Dorsolateral prefrontal cortex (tissue), 120 donors: ENCODE measurements at regions of chr7 and their contacts with region 1.

Region 1: GRCh38 chr7:98569691-98570337 is 47.3 kb upstream of the NPTX2 start:
- DNase-seq: peak; percentile 32 to 93 (median 82)
- H3K4me3 ChIP-seq: peak overlapping the region in 35 of 59 donors; percentile 9 to 55 (median 29)
- H3K27ac ChIP-seq: peak overlapping the region in 57 of 59 donors; percentile 26 to 96 (median 85)
- H3K27me3 ChIP-seq: peaks cover 0 to 5% (median 0%) of the 10 kb centered on the region in 45 donors
- CTCF ChIP-seq: no peak

Region 2: GRCh38 chr7:98434095-98434494 is 135.7 kb before region 1 on chr7:
- intact Hi-C with region 1: loop called in 1 of 2 experiments (anchors 5 kb)
- DNase-seq: no peak
- H3K4me3 ChIP-seq: no peak overlapping the region
- H3K27ac ChIP-seq: no peak overlapping the region
- H3K27me3 ChIP-seq: peaks cover 0 to 3% (median 0%) of the 10 kb centered on the region in 45 donors
- CTCF ChIP-seq: no peak

Region 3: GRCh38 chr7:98826387-98827231 is 256.8 kb after region 1 on chr7:
- intact Hi-C with region 1: loop called in 1 of 2 experiments (anchors 10 kb)
- DNase-seq: peak; percentile 49 to 97 (median 78)
- H3K4me3 ChIP-seq: peak overlapping the region in 3 of 59 donors; percentile 9 to 23 (median 12)
- H3K27ac ChIP-seq: peak overlapping the region in 2 of 59 donors; percentile 21 to 46
- H3K27me3 ChIP-seq: no peaks in the 10 kb centered on the region
- CTCF ChIP-seq: peak in 10 of 56 donors; percentile 8 to 21 (median 11)